Thyroid gland (tissue), 4 donors: ENCODE measurements at regions of chr4 and their contacts with region 1.

Region 1: GRCh38 chr4:41281038-41281634 is 24.4 kb downstream of the UCHL1 start:
- DNase-seq: peak; percentile 24 to 25
- H3K4me3 ChIP-seq: no peak overlapping the region
- H3K27ac ChIP-seq: no peak overlapping the region
- H3K4me1 ChIP-seq: no peaks in the 10 kb centered on the region
- H3K27me3 ChIP-seq: no peaks in the 10 kb centered on the region
- CTCF ChIP-seq: peak; percentile 35 to 97 (median 85)
- POLR2A ChIP-seq: no peak

Region 2: DNA sequence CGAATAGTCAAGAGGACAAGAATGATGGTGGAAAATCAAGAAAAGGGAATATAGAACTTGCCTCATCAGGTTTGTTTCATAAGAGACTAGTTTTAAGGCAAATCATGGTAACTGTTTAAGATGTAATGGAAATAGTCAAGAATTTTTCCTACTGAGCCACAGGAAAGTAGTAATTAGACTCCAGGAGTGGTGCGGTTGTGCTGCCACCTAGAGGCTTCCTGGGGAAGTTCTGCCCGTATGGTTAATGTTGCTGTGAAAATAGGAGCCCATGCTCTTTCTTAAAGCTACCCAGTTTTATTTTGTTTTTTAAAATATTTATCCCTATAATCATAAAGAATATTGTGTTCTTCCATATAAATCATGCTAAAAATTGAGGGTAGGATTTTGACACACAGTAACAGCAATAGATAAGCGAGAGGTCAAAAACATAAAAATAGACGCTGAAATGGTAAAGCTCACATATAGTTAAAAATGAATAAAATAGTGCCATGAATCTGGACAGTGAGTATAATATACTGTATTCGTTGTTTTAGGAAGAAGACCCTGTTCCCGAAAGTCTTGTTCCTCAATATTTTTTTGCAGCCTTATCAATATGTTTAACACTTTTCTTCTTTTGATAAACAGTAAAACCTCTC is 380.4 kb after region 1 on chr4:
- intact Hi-C with region 1: loop called (anchors 5 kb)
- DNase-seq: peak; percentile 66 to 68
- H3K4me3 ChIP-seq: no peak overlapping the region
- H3K27ac ChIP-seq: no peak overlapping the region
- H3K4me1 ChIP-seq: peaks cover 5 to 6% of the 10 kb centered on the region in 2 donors
- H3K27me3 ChIP-seq: no peaks in the 10 kb centered on the region
- CTCF ChIP-seq: peak; percentile 79 to 98 (median 85)
- POLR2A ChIP-seq: no peak

Region 3: GRCh38 chr4:41882625-41883347 is 601.6 kb after region 1 on chr4:
- intact Hi-C with region 1: loop called (anchors 5 kb)
- DNase-seq: peak; percentile 39 to 47
- H3K4me3 ChIP-seq: peak overlapping the region in 1 of 3 donors; percentile 28
- H3K27ac ChIP-seq: no peak overlapping the region
- H3K4me1 ChIP-seq: peaks cover 21 to 26% of the 10 kb centered on the region in 2 donors
- H3K27me3 ChIP-seq: peaks cover 19% of the 10 kb centered on the region
- CTCF ChIP-seq: peak; percentile 62 to 97 (median 78)
- POLR2A ChIP-seq: no peak